ENCODE measurements at regions of chr2 and their contacts with region 1.

Region 1: DNA sequence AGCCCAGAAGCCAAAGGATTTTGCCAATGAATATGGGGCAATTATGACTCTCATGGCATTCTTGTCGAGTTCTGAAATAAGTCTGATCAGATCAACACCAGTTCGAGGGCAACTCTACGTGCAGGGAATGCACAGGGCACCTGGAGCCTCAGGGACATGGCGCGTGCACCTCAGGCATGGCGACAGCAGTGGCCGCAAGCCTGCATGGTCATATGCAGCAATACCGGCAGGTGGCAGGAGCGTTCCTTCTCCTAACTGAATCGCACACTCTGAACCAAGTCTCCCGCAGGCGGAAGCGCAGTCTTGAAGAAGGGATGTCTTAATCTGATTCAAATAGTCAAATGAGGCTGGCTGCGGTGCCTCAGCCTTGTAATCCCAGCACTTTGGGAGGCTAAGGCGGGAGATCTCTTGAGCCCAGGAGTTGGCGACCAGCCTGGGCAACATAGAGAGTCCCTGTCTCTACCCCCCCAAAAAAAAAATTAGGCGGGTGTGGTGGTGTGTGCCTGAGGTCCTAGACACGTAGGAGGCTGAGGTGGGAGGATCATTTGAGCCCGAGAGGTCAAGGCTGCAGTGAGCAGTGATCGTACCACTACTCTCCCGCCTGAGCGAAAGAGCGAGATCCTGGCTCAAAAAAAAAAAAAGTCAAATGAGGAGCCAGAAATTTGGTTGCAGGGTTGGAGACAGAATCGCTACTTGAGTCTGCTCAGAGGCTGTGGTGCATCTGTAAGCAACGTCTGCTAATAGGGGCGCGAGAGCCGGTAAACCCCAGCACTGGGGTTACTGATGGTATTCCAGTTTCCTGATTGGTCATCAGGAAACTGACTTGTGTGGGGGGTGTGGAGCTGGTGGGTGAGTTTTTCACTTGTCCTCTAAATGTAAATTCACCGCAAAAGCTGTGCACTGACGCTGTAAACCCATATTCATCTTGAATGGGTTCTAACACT is 28.8 kb downstream of the FHL2 start:
- DNase-seq: peak; percentile 90
- ATAC-seq: peak; percentile 96
- H3K4me3 ChIP-seq: no peak overlapping the region
- H3K27ac ChIP-seq: no peak overlapping the region
- H3K4me1 ChIP-seq: peaks cover 11% of the 10 kb centered on the region
- H3K27me3 ChIP-seq: no peaks in the 10 kb centered on the region
- CTCF ChIP-seq: peak; percentile 92

Region 2: DNA sequence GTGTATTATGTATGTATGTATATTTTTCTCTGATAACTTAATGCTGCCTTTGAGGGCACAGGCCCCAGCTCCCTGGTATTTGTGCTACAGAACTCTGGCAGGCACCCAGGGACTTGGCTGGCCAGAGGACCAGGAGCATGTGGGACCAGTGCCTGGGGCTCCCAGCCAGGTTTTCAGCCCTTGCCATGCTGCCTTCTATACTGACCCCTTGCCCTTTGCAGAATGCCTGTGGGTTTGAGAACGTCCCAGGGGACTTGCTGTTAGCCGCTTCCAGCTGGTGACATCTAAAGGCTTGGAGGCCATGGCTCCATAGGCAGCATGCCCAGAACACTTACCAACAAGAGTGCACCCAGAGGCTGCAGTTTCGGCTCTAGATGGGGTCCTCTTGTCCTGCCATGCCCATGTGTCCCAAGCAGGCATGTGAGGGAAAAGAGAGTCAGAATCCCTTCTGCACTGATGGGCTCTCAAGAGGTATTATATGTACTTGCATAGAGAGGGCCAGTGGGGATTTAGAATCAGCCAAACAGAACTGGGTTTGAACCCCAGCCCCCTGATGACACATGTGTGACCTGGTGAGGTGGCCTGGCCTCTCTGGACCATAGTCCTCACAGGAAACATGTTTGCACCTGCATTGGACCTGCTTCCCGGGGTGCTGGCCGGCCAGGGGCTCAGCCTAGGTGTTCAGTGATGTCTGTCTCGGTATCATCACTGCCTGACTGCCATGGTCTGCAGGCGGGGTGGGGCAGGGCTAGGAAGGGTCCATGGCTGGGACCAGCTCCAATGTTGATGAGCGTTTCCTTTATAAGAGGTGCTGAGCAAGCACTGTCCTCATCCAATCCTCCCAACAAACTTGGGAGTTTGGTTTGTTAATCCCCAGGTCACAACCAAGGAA is 148.0 kb after region 1 on chr2:
- intact Hi-C with region 1: loop called (anchors 5 kb)
- DNase-seq: peak; percentile 68
- ATAC-seq: peak; percentile 56
- H3K4me3 ChIP-seq: no peak overlapping the region
- H3K27ac ChIP-seq: no peak overlapping the region
- H3K4me1 ChIP-seq: no peaks in the 10 kb centered on the region
- H3K27me3 ChIP-seq: peaks cover 4% of the 10 kb centered on the region
- CTCF ChIP-seq: no peak

Region 3: DNA sequence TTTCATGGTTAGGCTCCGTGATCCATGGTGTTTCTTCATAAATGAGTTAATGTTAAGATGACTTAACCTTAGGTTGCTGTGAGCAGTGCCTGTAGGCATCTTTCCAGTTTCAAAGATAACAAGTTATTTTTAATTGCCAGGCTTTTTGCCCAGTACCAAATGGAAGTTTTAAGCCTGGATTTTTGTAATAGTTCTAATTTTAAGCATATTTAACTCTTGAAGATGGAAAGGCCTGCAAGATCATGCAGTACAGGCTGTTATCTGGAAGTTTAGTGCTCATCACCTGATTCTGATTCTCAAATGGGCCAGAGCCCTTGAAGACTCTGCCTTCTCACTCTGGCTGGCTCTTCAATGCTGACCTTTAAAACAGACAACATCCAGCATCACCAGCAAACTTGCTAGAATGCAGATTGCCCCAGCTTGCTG is 516.0 kb after region 1 on chr2:
- intact Hi-C with region 1: no loop called
- DNase-seq: no peak
- ATAC-seq: no peak
- H3K4me3 ChIP-seq: no peak overlapping the region
- H3K27ac ChIP-seq: no peak overlapping the region
- H3K4me1 ChIP-seq: peaks cover 31% of the 10 kb centered on the region
- H3K27me3 ChIP-seq: no peaks in the 10 kb centered on the region
- CTCF ChIP-seq: no peak